ACHN (cell line): ENCODE measurements at regions of chr3 and their contacts with region 1.

Region 1: GRCh38 chr3:72938471-72939265 is 50.8 kb downstream of the GXYLT2 start:
- DNase-seq: peak; percentile 59

Region 2: GRCh38 chr3:72606005-72606800 is 332.5 kb before region 1 on chr3:
- in situ Hi-C with region 1: no loop called
- DNase-seq: no peak

Region 3: DNA sequence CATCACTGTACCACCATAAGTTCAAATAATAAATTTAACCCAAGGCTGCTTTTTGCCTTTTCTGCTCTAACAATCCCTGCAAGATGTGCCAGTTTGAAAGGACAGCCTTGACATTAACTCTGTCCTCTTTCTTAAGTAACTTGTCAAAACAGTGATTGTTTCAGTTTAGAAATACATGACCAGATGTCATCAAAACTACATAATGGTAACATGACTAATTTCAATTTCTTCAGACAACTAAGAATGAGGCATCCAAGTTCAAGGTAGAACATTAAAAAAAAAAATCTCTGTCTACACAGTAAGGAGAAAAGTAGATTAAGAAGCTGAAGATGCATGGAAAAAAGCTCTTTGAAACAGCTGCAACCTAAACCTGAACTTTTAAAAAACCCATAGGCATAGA is 137.8 kb before region 1 on chr3:
- in situ Hi-C with region 1: no loop called
- DNase-seq: no peak

Region 4: GRCh38 chr3:73056014-73056844 is 117.6 kb after region 1 on chr3:
- in situ Hi-C with region 1: loop called (anchors 25 kb)
- DNase-seq: peak; percentile 32